HAP-1 (cell line): ENCODE measurements at regions of chr9 and their contacts with region 1.

Region 1: DNA sequence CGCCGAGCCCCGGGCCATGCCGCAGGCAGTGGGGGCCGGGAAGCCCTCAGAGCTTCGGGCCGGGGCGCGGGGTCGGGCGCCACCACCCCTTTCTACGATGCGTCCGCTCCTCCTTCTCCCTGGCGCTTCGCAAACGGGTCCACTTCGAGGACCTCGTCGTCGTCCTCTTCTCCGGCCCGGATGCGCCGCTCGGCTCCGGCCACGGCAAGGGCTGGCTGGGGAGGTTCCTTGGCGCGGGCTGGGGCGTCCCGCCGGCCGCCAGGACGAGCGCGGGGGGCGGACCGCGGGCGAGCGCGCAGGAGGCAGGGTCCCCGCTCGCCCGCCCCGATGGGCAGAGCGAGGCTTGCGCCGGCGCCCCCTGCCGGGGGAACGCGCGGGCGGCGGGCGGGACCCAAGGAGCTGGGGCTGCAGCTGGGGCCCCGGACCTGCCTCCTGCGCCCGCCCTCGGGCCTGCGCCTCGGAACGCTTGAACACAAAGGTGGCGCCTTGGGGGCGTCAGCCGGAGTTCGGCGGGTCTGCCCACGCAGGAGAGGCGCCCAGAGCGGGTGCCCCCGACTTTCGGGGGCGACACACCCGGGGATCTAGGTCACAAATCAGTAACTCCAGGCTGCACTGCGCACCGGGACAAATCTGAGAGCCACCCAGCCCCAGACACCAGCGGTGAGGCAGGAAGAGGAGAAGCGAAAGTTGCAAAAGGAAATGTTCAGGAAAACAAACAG is at the start of gene ROR2:
- DNase-seq: peak; percentile 71 to 86
- H3K4me3 ChIP-seq: peak within 1 kb of the TSS; percentile 64
- H3K4me1 ChIP-seq: peaks cover 34% of the 10 kb centered on the region
- H3K27me3 ChIP-seq: no peaks in the 10 kb centered on the region

Region 2: DNA sequence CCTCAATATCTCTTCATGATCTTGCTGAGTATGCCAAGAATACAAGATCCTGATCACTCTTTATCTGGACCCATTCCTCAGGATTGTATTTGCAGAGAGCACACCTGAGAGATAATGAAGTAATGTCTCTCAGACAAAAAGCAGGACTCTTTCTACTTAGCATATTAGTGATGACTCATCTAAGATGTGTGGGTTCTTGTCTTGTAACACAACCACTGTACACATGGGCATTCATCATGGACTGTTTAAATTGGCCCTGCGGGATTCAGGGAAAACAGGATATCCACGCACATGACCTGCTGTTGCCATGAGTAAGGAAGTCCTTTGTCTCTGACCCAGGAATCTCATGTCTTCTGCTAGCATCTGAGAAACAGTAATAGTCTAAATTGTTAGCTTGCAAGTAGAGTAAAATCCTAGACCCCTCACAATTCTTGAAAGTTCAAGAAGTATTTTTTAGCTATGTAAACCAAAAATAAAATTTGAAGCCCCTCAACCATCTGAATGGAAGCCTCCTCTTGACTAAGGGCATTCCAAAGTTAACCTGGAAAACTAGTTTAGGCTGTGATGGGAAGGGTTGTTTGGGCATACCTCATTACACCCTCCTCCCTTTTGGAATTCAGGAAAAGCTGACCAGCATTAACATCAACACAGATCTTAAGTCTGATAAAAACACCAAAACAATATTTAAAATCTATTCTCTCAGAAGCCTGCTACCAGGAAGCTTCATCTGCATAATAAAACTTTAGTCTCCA is 498.4 kb before region 1 on chr9:
- in situ Hi-C with region 1: no loop called
- DNase-seq: no peak
- H3K4me3 ChIP-seq: no peak overlapping the region
- H3K4me1 ChIP-seq: no peaks in the 10 kb centered on the region
- H3K27me3 ChIP-seq: no peaks in the 10 kb centered on the region

Region 3: DNA sequence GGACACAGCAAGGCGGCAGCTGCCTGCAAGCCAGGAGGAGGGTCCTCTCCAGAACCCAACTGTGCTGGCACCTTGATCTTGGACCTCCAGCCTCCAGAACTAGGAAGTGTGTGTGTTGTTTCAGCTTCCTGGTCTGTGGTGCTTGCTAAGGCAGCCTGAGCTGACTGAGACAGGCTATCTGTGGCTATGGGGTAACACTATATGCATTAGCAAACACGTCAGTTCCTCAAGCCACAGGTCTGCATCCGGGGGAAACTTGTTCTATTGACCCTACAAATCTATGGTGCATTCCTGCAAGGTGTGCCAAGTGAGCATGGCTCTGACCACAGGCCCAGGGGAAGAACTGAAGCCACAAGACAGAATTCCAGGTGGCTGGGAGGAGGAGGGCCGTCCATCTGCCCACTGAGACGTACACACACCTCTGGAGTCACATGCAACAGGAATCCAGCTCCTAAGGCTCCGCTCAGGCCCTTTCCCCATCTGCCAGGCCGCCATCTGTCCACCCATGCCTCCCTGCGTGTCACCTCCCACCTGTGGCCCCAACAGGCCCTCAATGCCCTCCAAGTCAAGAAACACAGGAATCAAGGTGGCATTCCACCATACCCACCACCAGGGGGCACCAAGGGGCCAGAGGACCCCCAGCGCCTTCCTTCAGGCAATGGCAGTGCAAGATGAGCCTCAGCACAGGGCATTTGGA is 174.9 kb before region 1 on chr9:
- in situ Hi-C with region 1: loop called (anchors 10 kb)
- DNase-seq: peak; percentile 50 to 83
- H3K4me3 ChIP-seq: no peak overlapping the region
- H3K4me1 ChIP-seq: no peaks in the 10 kb centered on the region
- H3K27me3 ChIP-seq: no peaks in the 10 kb centered on the region; the same call in 1 of the 2 replicates

Region 4: DNA sequence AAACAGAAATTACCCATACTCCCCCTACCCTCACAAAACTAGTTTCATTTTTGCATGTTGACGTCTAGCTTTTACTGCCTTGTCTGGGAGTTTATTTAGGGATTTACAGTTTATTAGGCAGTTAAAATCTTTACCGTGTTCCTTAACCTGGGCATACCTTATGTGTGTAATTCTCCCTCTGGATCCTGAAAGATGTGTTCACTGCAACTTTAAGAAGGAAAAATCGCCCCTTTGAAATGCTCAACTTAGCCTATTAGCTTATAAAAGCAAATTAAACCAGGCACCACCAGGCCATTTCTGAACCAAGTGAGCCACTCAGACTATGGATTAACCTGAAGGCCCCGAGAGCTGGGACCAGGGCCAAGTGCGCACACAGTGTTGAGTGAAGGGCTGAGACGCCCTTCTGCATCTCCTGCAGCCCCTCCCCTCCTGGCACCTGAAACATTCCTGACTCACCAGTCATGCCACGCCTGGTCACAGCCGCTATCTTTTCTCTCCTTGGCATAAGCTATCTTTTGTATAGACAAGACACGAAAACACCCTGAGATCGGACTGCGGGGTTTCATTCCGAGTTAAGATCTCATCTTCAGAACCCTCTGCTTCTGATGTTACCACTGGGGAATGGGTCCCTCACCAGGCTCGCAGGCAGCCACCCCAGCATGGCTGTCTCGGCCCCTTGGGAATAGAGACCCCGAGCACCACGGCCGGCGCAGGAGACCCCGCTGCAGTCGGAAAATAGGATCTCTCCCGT is 111.9 kb before region 1 on chr9:
- in situ Hi-C with region 1: no loop called
- DNase-seq: peak; percentile 44 to 72
- H3K4me3 ChIP-seq: no peak overlapping the region
- H3K4me1 ChIP-seq: peaks cover 11% of the 10 kb centered on the region
- H3K27me3 ChIP-seq: no peaks in the 10 kb centered on the region